Activated CD8-positive, alpha-beta T cell treated with anti-CD3 and anti-CD28 coated beads for 36 hours (primary cell): ENCODE measurements at regions of chr1 and their contacts with region 1.

Region 1: GRCh38 chr1:246329900-246330299 is 177.2 kb downstream of the SMYD3 start:
- DNase-seq: peak; percentile 64
- ATAC-seq: peak; percentile 93
- H3K4me3 Mint-ChIP-seq: no peak overlapping the region
- H3K27ac Mint-ChIP-seq: peak overlapping the region; percentile 75
- H3K4me1 Mint-ChIP-seq: peaks cover 44% of the 10 kb centered on the region
- H3K27me3 Mint-ChIP-seq: no peaks in the 10 kb centered on the region
- CTCF ChIP-seq: no peak

Region 2: GRCh38 chr1:246117066-246117791 is 212.7 kb before region 1 on chr1:
- CTCF ChIA-PET with region 1: no interaction called
- POLR2A ChIA-PET with region 1: no interaction called
- intact Hi-C with region 1: loop called (anchors 10 kb)
- DNase-seq: peak; percentile 55
- ATAC-seq: peak; percentile 90
- H3K4me3 Mint-ChIP-seq: peak overlapping the region; percentile 19
- H3K27ac Mint-ChIP-seq: peak overlapping the region; percentile 70
- H3K4me1 Mint-ChIP-seq: peaks cover 15% of the 10 kb centered on the region
- H3K27me3 Mint-ChIP-seq: no peaks in the 10 kb centered on the region
- CTCF ChIP-seq: peak; percentile 64

Region 3: DNA sequence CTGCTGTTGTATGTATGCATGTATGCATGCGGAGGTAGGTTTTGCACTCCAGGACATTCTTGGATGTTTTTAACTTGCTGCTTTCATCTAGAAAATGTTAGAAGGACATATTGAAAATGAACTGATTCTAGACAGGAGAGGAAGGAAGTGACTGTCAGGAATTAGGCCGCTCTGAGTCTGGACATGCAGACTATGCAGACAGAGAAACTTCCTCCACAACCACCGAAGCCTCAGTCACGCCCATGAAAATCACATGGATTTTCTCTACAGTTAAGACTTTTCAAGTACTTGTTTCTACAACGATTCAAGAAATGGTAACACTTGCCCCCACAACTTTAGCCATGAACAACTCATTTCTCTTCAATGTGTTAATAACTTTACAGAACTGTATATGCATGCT is 33.9 kb before region 1 on chr1:
- CTCF ChIA-PET with region 1: no interaction called
- POLR2A ChIA-PET with region 1: no interaction called
- intact Hi-C with region 1: no loop called
- DNase-seq: no peak
- ATAC-seq: no peak
- H3K4me3 Mint-ChIP-seq: no peak overlapping the region
- H3K27ac Mint-ChIP-seq: no peak overlapping the region
- H3K4me1 Mint-ChIP-seq: peaks cover 5% of the 10 kb centered on the region
- H3K27me3 Mint-ChIP-seq: no peaks in the 10 kb centered on the region
- CTCF ChIP-seq: no peak

Region 4: GRCh38 chr1:246476771-246477170 is 146.9 kb after region 1 on chr1:
- CTCF ChIA-PET with region 1: no interaction called
- POLR2A ChIA-PET with region 1: no interaction called
- intact Hi-C with region 1: loop called (anchors 10 kb)
- DNase-seq: no peak
- ATAC-seq: peak; percentile 87
- H3K4me3 Mint-ChIP-seq: no peak overlapping the region
- H3K27ac Mint-ChIP-seq: no peak overlapping the region
- H3K4me1 Mint-ChIP-seq: peaks cover 28% of the 10 kb centered on the region
- H3K27me3 Mint-ChIP-seq: no peaks in the 10 kb centered on the region
- CTCF ChIP-seq: no peak